Testis (tissue), 5 donors: ENCODE measurements at regions of chr17 and their contacts with region 1.

Region 1: DNA sequence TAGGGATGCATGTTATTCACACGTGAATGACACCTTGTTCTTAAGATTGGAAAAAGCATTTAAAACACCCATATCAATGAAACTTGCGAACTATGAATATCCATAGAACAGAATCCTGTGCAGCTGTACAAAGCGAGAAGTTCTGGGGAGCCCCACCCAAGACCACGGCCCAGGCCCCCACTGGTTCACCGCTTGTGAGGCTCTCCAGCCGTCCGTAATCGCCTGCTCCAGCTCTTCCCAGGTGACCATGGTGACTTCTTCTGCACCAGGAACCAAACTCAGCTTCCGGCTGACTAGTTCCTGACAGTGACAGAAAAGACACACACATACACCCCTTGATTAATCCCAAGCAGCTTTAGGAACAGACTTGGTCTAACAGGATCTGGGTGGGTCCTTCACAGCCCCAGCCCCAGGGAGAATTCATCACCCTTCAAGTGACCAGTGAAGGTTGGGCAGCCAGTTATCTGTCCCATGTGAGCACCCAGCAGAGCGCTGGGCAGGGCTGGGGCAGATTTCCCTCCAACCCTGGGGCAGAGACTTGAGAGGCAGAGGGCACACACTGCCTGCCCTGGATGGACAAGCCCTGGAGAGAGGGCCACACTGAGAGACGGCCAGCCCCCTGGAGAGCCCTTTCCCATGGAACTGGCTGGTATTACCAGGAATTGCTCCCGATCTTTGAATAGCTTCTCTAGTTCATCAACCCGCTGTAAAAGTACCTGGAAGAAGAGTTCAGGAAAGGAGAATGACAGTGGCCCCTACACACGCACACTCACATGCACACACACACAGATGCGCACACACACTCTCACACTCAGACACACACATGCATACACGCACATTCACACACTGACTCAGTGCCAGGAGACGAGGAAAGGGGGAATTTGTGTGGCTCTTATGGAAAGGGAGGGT is 3.6 kb downstream of the QRICH2 start:
- DNase-seq: no peak
- H3K4me3 ChIP-seq: no peak overlapping the region
- H3K27ac ChIP-seq: no peak overlapping the region
- H3K4me1 ChIP-seq: no peaks in the 10 kb centered on the region
- H3K27me3 ChIP-seq: no peaks in the 10 kb centered on the region
- CTCF ChIP-seq: no peak
- POLR2A ChIP-seq: no peak

Region 2: DNA sequence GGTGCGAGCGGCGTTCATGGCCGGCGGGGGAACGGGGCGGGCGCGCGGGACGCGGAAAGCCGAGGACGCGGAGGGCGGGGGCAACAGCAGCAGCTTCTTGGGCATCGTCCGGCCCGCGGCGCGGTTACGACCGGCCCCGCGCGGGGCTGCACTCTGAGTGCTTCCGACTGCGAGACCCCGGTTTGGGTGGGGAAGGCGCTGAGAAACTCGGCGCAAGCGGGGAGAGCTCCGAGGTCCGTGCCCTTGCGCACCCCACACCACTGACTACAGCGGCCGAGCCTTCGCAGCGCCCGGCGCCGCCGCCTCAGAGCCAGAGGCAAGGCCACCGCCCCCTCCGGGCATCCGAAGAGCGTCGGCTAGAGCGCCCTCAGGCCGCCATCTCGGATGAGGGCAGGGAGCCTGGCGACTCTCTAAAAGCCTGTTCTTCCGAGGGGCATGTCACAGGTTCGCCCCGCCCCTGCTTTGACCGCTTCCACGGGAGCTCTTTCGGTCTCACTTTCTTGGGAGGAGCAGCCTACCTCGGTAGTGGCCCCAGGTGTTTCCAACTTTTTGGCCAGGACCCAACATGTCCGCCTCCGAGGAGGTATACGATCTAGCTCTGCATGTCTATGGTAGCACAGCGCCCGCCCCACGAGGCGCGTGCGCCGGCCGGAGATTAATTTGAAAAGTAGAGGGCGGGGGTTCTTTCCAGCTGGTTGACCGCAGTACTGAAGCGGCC is 49.3 kb after region 1 on chr17 and contains the start of gene PRPSAP1:
- intact Hi-C with region 1: no loop called
- DNase-seq: peak; percentile 94
- H3K4me3 ChIP-seq: peak within 1 kb of the TSS; percentile 88 to 90
- H3K27ac ChIP-seq: peak within 1 kb of the TSS; percentile 76 to 90
- H3K4me1 ChIP-seq: peaks cover 16% of the 10 kb centered on the region
- H3K27me3 ChIP-seq: no peaks in the 10 kb centered on the region
- CTCF ChIP-seq: peak; percentile 27 to 55 (median 42)
- POLR2A ChIP-seq: peak; percentile 40
- total RNA-seq, gene PRPSAP1: 132 to 152 TPM

Region 3: GRCh38 chr17:76397687-76398487 is 93.4 kb after region 1 on chr17:
- intact Hi-C with region 1: loop called (anchors 5 kb)
- DNase-seq: peak; percentile 96
- H3K4me3 ChIP-seq: no peak overlapping the region
- H3K27ac ChIP-seq: no peak overlapping the region
- H3K4me1 ChIP-seq: peaks cover 3% of the 10 kb centered on the region
- H3K27me3 ChIP-seq: no peaks in the 10 kb centered on the region
- CTCF ChIP-seq: peak; percentile 95 to 98 (median 97)
- POLR2A ChIP-seq: no peak

Region 4: DNA sequence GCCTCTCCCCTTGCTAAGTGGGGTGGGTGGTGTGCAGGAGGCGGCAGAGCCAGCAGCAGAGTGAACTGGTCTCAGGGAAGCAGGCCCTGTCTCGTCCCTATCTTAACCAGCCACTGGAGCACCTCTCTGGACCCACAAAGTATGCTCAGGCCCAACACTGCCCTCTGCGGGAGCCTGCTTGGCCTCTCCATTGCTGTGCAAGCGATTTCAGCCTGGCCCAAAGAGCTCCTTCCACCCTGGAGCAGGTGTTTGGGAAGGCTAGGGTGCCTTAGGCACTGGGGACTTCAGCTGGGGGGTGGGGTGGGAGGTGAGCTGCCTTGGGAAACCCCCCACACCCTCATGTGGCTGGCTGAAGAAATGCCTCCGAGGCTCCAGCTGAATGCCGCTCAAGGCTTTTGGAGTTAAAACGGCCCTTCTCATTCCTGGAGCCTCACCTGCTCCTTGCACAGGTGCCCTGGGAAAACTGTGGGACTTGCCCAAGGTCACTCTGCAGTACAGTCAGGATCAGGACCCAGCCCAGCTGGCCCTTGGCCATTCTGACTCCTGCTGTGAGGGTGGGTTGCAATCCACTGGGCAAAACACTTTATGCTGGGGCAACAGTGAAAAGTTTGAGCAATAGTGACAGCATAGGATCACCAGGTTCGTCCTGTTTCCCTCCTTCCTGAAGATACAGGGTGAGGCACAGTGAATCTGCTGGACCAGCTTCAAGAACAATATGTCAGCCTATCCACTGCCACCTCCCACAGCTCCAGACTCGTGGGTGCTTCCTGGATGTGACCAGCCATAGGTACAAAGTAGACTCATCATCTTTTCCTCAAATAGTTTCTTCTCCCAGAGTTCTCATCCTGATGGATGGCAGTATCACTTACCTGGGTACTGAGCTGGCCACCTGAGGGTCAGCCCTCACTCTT is 154.4 kb after region 1 on chr17:
- intact Hi-C with region 1: no loop called
- DNase-seq: peak; percentile 78
- H3K4me3 ChIP-seq: no peak overlapping the region
- H3K27ac ChIP-seq: no peak overlapping the region
- H3K4me1 ChIP-seq: no peaks in the 10 kb centered on the region
- H3K27me3 ChIP-seq: no peaks in the 10 kb centered on the region
- CTCF ChIP-seq: peak in 2 of 3 experiments; percentile 24 to 34
- POLR2A ChIP-seq: no peak